ENCODE measurements at regions of chrX and their contacts with region 1.

Region 1: DNA sequence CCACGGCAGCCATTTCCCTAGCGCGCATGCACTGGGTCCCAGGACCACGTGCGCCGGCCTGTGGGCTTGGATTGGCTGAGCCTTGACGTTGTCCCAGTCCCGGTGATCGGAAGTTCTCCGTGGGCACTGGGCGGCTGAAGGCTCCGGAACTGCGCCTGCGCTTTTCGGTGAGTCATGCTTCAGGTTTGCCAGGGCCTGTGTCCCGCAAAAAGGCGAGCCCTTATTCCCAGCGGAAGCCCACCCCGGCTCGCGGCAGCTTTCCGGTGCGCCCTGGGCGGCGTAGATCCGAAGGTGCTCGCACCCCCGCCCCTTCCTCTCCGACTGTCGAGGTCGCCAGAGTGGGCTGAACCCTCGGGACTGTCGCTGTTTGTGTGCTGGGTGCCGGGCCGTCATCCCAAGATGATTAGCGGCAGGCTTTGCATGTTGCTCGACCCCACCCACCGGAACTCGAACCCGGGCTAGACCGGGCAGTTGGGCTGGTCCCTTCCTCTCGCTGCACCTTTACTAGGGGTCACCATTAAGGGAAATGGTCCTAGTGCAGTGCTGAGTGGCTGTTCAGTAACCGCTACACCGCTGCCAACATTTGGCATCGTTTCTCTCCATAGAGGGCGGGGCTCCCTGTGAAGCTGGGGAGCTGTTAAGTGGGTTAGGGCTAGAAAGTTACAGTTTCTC is at the start of gene TCEANC:
- DNase-seq: peak; percentile 86 to 96
- ATAC-seq: peak; percentile 90 to 98 (median 96)
- H3K4me3 ChIP-seq: peak within 1 kb of the TSS; percentile 81
- H3K4me3 Mint-ChIP-seq: peak within 1 kb of the TSS; percentile 90
- H3K27ac ChIP-seq: peak within 1 kb of the TSS; percentile 97
- H3K27ac Mint-ChIP-seq: peak within 1 kb of the TSS; percentile 88 to 94
- H3K4me1 ChIP-seq: peaks cover 10% of the 10 kb centered on the region
- H3K4me1 Mint-ChIP-seq: peaks cover 4 to 30% of the 10 kb centered on the region in 2 donors
- H3K27me3 ChIP-seq: no peaks in the 10 kb centered on the region
- H3K27me3 Mint-ChIP-seq: peaks cover 0 to 6% of the 10 kb centered on the region in 2 donors
- CTCF ChIP-seq: no peak
- total RNA-seq, gene TCEANC: 11.2 to 17.8 (median 13.4) TPM

Region 2: GRCh38 chrX:13688958-13689740 is 36.0 kb after region 1 on chrX and contains the start of gene RAB9A:
- intact Hi-C with region 1: loop called (anchors 1 kb)
- DNase-seq: peak; percentile 78 to 84
- ATAC-seq: peak; percentile 71 to 92 (median 87)
- H3K4me3 ChIP-seq: peak within 1 kb of the TSS; percentile 82
- H3K4me3 Mint-ChIP-seq: peak within 1 kb of the TSS; percentile 89
- H3K27ac ChIP-seq: peak within 1 kb of the TSS; percentile 95
- H3K27ac Mint-ChIP-seq: peak within 1 kb of the TSS; percentile 86 to 90
- H3K4me1 ChIP-seq: peaks cover 34% of the 10 kb centered on the region
- H3K4me1 Mint-ChIP-seq: peaks cover 40 to 47% of the 10 kb centered on the region in 2 donors
- H3K27me3 ChIP-seq: no peaks in the 10 kb centered on the region
- H3K27me3 Mint-ChIP-seq: no peaks in the 10 kb centered on the region
- CTCF ChIP-seq: no peak
- total RNA-seq, gene RAB9A: 27.0 to 36.9 (median 32.9) TPM

Region 3: GRCh38 chrX:13742397-13743176 is 89.4 kb after region 1 on chrX:
- intact Hi-C with region 1: loop called (anchors 2 kb)
- DNase-seq: peak; percentile 43 to 76
- ATAC-seq: peak; percentile 90 to 92 (median 92)
- H3K4me3 ChIP-seq: peak overlapping the region; percentile 13
- H3K4me3 Mint-ChIP-seq: peak overlapping the region; percentile 75
- H3K27ac ChIP-seq: peak overlapping the region; percentile 91
- H3K27ac Mint-ChIP-seq: peak overlapping the region; percentile 91 to 94
- H3K4me1 ChIP-seq: peaks cover 12% of the 10 kb centered on the region
- H3K4me1 Mint-ChIP-seq: peaks cover 16 to 25% of the 10 kb centered on the region in 2 donors
- H3K27me3 ChIP-seq: no peaks in the 10 kb centered on the region
- H3K27me3 Mint-ChIP-seq: no peaks in the 10 kb centered on the region
- CTCF ChIP-seq: no peak

Region 4: DNA sequence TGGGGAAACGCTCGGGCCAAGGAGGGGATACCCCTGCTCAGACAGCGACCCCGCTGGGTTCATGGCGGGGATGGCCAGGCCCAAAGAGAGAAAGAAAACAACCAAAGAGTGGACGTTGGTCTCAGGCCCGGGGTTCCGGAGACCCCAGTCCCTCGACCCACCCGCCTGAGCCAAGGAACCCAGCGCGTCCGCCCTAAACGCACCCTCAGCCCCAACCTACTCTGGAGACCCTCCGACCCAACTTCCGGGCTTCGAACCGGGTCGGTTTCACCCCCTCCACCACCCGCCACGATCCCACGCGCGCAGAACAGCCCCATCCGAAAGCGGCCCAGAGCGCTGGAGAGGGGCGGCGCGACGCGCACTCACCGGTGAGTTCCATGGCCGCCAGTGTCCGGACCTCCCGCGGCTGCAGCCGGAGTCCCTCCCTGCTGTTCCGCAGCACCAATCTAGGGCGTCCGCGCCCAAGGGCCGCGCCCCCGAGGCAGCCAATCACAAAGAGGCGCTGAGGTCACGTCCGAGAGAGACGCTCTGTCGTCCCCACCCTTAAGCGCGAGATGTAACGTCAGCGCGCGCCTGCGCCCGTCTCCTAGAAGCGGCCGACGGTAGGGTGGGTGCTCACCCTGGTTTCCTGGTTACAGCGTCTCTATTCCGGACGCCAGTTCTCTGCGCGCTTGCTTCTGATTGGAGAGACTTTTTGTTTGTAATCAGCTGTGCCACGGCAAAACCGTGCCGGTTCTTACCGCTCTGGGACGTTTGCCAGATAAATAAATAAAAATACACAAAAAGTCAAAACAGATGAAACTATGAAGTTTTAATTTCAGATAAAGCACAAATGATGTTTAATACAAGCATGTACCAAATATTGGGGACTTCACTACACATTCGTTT is 1682.2 kb after region 1 on chrX and contains the start of gene PIGA:
- intact Hi-C with region 1: loop called (anchors 10 kb)
- DNase-seq: peak; percentile 84 to 95
- ATAC-seq: peak; percentile 85 to 98 (median 88)
- H3K4me3 ChIP-seq: peak within 1 kb of the TSS; percentile 94
- H3K4me3 Mint-ChIP-seq: peak within 1 kb of the TSS; percentile 89
- H3K27ac ChIP-seq: peak within 1 kb of the TSS; percentile 95
- H3K27ac Mint-ChIP-seq: peak within 1 kb of the TSS; percentile 93
- H3K4me1 ChIP-seq: peaks cover 11% of the 10 kb centered on the region
- H3K4me1 Mint-ChIP-seq: peaks cover 0 to 14% of the 10 kb centered on the region in 2 donors
- H3K27me3 ChIP-seq: peaks cover 3% of the 10 kb centered on the region
- H3K27me3 Mint-ChIP-seq: peaks cover 8 to 34% of the 10 kb centered on the region in 2 donors
- CTCF ChIP-seq: no peak
- total RNA-seq, gene PIGA: 71.8 to 111 (median 87.6) TPM